ENCODE measurements at regions of chr3 and their contacts with region 1.

Region 1: GRCh38 chr3:32934150-32934742 is 17.2 kb upstream of the CCR4 start:
- DNase-seq: no peak
- ATAC-seq: no peak
- H3K4me3 ChIP-seq: no peak overlapping the region
- H3K27ac ChIP-seq: no peak overlapping the region
- H3K4me1 ChIP-seq: no peaks in the 10 kb centered on the region
- H3K27me3 ChIP-seq: no peaks in the 10 kb centered on the region
- CTCF ChIP-seq: peak; percentile 58

Region 2: GRCh38 chr3:32510075-32510724 is 424.0 kb before region 1 on chr3:
- intact Hi-C with region 1: loop called in 1 of 2 experiments (anchors 10 kb)
- DNase-seq: peak in 1 of 2 donors; percentile 41
- ATAC-seq: peak; percentile 83 to 98 (median 89)
- H3K4me3 ChIP-seq: no peak overlapping the region
- H3K27ac ChIP-seq: no peak overlapping the region
- H3K4me1 ChIP-seq: no peaks in the 10 kb centered on the region
- H3K27me3 ChIP-seq: no peaks in the 10 kb centered on the region
- CTCF ChIP-seq: peak; percentile 79

Region 3: DNA sequence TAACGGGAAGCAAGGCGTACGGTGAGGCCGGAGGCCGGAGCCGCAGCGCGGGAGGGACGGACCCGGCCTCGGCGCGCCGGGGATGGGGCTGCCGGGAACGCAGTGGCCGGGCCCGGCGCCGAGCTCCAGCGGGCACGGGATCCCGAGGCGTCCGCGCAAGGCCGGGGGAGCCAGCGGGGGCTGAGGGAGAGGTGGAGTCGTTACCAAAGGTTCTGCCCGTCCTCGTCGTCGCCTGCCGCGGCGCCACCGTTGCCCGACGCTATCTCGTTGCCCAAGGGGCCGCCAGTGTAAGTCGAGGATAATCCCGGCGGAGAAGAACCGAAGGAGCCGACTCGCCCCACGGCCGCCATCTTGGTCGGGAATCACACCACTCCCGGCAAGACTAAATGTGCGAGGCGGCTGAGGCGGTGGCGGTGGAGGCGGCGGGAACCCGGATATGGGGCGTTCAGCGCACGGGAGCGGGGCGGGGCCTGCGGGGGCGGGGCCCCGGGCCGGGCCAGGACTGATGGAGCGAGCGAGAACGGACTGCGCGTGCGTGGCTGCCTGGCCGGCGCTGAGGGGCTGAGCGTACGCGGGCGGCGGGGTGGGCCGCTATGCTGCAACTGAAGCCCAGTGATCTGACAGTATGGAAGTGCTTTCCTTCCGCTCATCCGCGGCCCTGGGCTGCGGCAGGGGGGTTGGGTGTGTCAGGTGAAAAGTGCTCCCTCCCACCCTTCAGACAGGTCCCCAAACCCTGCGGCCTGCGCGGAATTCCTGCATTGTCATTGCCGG is 363.6 kb before region 1 on chr3 and contains the start of gene DYNC1LI1:
- intact Hi-C with region 1: no loop called
- DNase-seq: peak; percentile 97 to 98
- ATAC-seq: peak; percentile 97 to 99 (median 98)
- H3K4me3 ChIP-seq: peak within 1 kb of the TSS; percentile 71
- H3K27ac ChIP-seq: peak within 1 kb of the TSS; percentile 90
- H3K4me1 ChIP-seq: peaks cover 18% of the 10 kb centered on the region
- H3K27me3 ChIP-seq: no peaks in the 10 kb centered on the region
- CTCF ChIP-seq: no peak
- total RNA-seq, gene DYNC1LI1: 44.0 to 50.4 (median 47.4) TPM

Region 4: DNA sequence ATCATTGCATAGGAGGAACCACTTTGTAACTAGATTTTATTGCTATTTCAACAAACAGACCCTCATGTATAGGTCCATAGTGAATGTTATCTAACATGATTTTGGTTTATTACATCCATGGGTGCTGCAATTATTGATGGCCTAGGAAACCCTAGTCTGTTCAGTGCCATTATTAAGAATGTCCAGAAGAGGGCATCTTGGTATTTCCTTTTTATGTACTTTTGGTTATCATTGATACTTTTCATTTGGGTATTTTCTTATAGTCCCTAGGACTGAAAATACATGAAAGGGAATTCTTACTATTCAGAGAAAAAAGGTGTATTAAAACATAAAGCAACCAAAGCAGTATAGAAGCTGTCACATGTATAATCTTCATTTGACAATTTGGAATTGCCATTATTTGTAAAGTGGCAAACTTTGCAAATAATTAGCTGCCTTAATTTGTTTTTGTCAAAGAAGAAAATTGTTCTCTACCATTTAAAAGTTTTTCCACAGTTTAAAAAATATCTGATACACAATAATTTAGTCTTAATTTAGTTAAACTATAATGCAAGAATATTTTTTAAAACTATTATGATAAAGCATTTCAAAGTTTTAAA is 200.5 kb before region 1 on chr3:
- intact Hi-C with region 1: loop called in 1 of 2 experiments (anchors 5 kb)
- DNase-seq: no peak
- ATAC-seq: no peak
- H3K4me3 ChIP-seq: no peak overlapping the region
- H3K27ac ChIP-seq: no peak overlapping the region
- H3K4me1 ChIP-seq: no peaks in the 10 kb centered on the region
- H3K27me3 ChIP-seq: no peaks in the 10 kb centered on the region
- CTCF ChIP-seq: peak; percentile 46

Measured in psoas muscle (tissue), 8 donors.